ENCODE measurements at regions of chr4 and their contacts with region 1.

Region 1: DNA sequence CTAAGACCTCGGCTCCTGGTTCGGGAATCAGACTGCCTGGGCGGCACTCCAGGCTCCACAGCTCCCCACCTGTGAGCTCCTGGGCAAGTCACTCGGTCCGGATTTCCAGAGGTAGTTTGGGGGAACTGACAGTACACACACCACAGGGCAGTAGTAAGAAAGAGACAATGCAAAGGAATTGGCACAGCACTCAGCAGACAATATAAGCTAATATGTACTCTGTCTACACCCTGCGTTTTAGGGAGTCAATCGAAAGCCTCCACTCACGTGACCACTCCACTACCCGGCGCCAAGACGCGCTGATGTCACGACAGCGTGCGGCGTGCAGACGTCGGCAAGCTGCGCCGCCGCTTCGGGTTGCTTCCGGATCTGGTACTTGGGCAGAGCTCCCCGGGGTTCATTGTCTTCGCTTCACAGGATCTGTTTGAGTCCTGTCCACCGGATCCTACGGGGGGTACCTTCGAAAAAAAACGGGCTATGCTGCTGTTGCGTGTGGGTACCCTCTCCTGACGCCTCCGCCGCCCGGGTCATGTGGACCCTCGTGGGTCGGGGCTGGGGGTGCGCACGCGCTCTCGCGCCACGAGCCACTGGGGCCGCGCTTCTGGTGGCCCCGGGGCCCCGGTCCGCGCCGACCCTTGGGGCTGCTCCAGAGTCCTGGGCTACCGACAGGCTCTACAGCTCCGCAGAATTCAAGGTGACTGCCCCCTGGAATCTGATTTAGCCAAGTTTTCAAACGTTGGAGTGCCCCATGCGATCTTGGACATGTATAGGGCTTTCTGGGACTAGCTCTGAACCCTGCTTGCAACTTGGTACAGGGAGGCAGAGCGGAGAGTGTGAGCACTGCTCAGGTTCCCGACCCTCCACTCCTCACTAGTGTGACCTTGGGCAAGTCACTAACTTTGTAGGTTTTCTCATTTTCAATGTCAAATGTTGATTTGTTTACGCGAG is at the start of gene GUF1:
- DNase-seq: peak; percentile 97
- H3K4me3 Mint-ChIP-seq: peak within 1 kb of the TSS; percentile 98
- H3K27ac Mint-ChIP-seq: peak within 1 kb of the TSS; percentile 98
- H3K4me1 Mint-ChIP-seq: peaks cover 26% of the 10 kb centered on the region
- H3K27me3 Mint-ChIP-seq: peaks cover 9% of the 10 kb centered on the region
- total RNA-seq, gene GUF1: 38.4 and 39.9 TPM in 2 replicates

Region 2: GRCh38 chr4:44558031-44558605 is 120.2 kb before region 1 on chr4:
- intact Hi-C with region 1: no loop called
- DNase-seq: no peak
- H3K4me3 Mint-ChIP-seq: no peak overlapping the region
- H3K27ac Mint-ChIP-seq: no peak overlapping the region
- H3K4me1 Mint-ChIP-seq: no peaks in the 10 kb centered on the region
- H3K27me3 Mint-ChIP-seq: no peaks in the 10 kb centered on the region

Region 3: DNA sequence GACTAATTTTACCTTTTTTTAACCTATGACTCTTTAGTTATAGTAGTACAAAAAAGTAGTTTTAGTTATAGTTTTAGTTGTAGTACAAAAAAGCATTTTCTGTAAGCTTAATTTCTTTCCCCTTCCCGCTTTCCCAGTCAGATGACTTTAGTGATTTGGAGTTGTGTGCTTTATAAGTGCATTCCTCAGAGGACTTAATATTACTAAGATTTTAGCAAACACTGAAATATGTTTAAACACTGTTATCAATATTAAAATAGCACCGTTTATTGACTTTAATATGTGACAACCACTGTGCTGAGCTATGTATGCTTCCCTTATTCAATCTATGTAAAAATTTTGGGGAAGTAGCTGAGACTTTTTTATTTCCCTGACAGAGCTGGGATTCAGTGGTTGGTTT is 22.7 kb after region 1 on chr4:
- intact Hi-C with region 1: loop called (anchors 2 kb)
- DNase-seq: no peak
- H3K4me3 Mint-ChIP-seq: no peak overlapping the region
- H3K27ac Mint-ChIP-seq: no peak overlapping the region
- H3K4me1 Mint-ChIP-seq: peaks cover 2% of the 10 kb centered on the region
- H3K27me3 Mint-ChIP-seq: no peaks in the 10 kb centered on the region

Region 4: GRCh38 chr4:44726262-44726871 is 48.0 kb after region 1 on chr4 and contains the start of gene GNPDA2:
- intact Hi-C with region 1: loop called (anchors 1 kb)
- DNase-seq: peak; percentile 94
- H3K4me3 Mint-ChIP-seq: peak within 1 kb of the TSS; percentile 85
- H3K27ac Mint-ChIP-seq: peak within 1 kb of the TSS; percentile 91
- H3K4me1 Mint-ChIP-seq: peaks cover 24% of the 10 kb centered on the region
- H3K27me3 Mint-ChIP-seq: peaks cover 6% of the 10 kb centered on the region
- total RNA-seq, gene GNPDA2: 18.8 and 18.9 TPM in 2 replicates

Measured in activated CD4-positive, alpha-beta T cell treated with anti-CD3 and anti-CD28 coated beads, Interleukin-2, amount 10 ng/mL, durations not matched to agents 24 days and 14 days (primary cell).